Heart right ventricle (tissue), 16 donors: ENCODE measurements at regions of chr3 and their contacts with region 1.

Region 1: DNA sequence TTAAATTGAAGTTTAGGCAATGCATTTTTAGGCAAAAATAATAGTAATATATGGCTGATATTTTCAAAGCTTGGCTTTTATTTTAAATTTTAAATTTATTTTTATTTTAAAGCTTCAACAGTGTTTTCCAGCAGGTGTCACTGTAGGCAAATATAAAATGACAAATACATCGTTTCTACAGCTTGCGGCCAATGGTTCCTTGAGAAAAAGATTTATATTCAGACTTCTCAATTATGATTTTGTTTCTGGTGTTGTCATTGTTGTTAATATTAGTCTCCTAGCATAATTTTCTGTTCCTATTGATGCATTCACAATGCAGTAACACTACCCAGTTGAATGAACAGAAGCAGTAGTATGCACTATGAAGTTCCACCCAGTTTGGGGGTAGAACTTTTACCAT is 220.7 kb upstream of the DNAJC19 start:
- DNase-seq: no peak
- ATAC-seq: no peak
- H3K4me3 ChIP-seq: no peak overlapping the region
- H3K27ac ChIP-seq: no peak overlapping the region
- H3K4me1 ChIP-seq: no peaks in the 10 kb centered on the region
- H3K27me3 ChIP-seq: peaks cover 0 to 33% (median 10%) of the 10 kb centered on the region in 7 donors
- CTCF ChIP-seq: peak in 8 of 9 donors; percentile 16 to 52 (median 35)

Region 2: DNA sequence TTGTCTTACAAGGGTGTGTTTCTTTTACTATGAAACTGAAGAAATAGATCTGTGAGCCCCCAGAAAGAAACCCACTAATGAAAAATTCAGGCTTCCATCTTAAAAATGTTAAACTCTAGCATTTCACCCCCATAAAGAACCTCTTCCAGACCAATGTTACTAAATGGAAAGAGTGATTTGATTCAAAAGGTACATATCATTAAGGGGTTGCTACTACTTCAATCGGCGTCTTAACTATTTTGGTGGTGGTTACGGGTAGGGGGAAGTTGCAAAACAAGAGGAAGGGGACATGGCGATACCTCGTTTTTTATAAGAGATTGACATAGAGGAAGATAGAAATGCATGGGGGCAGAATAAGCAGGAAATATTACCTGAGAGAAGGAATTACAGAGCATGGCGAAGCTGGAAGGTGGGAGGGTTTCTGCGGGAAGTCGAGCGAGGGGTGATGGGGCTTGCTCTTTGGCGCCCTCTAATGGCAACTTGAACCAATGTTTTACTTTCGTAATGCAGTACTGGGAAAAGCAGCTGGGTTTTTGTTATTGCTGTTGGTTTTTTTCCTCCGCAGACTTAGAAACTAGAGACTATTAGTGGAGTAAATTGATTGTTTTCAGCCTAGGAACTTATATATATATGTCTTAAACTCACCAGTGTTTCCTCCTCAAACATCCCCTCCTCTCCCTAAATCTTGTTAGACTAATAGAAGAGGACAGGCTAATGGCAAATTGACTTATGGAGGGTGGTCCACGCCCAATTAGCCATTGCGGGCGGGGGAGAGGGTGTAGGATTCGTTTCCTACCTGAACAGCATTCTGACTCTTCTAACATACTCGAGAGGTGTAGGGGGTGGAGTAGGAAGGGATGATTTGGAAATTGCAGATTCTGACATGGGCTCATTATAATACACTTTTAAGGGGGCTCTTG is 490.2 kb after region 1 on chr3:
- intact Hi-C with region 1: loop called in 2 of 10 experiments (anchors 10 kb)
- DNase-seq: peak; percentile 24 to 65
- ATAC-seq: peak in 7 of 8 donors; percentile 70 to 80 (median 77)
- H3K4me3 ChIP-seq: peak overlapping the region in 3 of 10 donors; percentile 3 to 25 (median 16)
- H3K27ac ChIP-seq: no peak overlapping the region
- H3K4me1 ChIP-seq: peaks cover 6 to 38% (median 18%) of the 10 kb centered on the region in 9 donors
- H3K27me3 ChIP-seq: peaks cover 39 to 99% (median 99%) of the 10 kb centered on the region in 7 donors
- CTCF ChIP-seq: peak; percentile 61 to 86 (median 84)